Heart right ventricle (tissue), 16 donors: ENCODE measurements at regions of chr1 and their contacts with region 1.

Region 1: GRCh38 chr1:61253059-61253735 is 170.8 kb downstream of the NFIA start:
- DNase-seq: peak; percentile 44 to 81
- ATAC-seq: peak; percentile 67 to 82 (median 77)
- H3K4me3 ChIP-seq: no peak overlapping the region
- H3K27ac ChIP-seq: peak overlapping the region in 9 of 10 donors; percentile 23 to 78 (median 70)
- H3K4me1 ChIP-seq: peaks cover 19 to 90% (median 57%) of the 10 kb centered on the region in 9 donors
- H3K27me3 ChIP-seq: no peaks in the 10 kb centered on the region
- CTCF ChIP-seq: no peak

Region 2: DNA sequence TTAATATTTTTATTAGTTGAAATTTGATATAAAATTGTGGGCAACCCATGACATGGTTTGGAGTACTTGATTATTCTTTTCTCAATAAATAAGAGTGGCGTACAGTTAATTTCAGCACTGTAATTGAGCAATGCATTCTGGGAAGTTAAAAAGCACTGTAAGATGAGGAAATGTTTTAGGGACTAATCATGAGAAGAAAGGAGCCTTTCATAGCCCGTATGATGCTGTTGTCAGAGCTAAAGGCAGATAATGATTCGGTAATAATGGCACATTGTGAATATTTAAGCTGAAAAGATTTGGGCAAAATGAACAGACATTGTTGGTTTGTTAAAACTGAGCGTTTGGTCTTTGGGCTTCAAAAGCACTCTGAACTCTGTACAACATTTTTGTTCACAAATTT is 31.6 kb before region 1 on chr1:
- intact Hi-C with region 1: no loop called
- DNase-seq: no peak
- ATAC-seq: peak in 5 of 8 donors; percentile 34 to 52 (median 47)
- H3K4me3 ChIP-seq: no peak overlapping the region
- H3K27ac ChIP-seq: peak overlapping the region in 3 of 10 donors; percentile 6 to 41 (median 28)
- H3K4me1 ChIP-seq: peaks cover 0 to 53% (median 23%) of the 10 kb centered on the region in 9 donors
- H3K27me3 ChIP-seq: no peaks in the 10 kb centered on the region
- CTCF ChIP-seq: no peak

Region 3: GRCh38 chr1:61318319-61319125 is 65.3 kb after region 1 on chr1:
- intact Hi-C with region 1: loop called in 2 of 10 experiments (anchors 5 kb)
- DNase-seq: no peak
- ATAC-seq: peak; percentile 52 to 85 (median 75)
- H3K4me3 ChIP-seq: peak overlapping the region in 5 of 10 donors; percentile 6 to 32 (median 21)
- H3K27ac ChIP-seq: peak overlapping the region; percentile 15 to 75 (median 60)
- H3K4me1 ChIP-seq: peaks cover 5 to 52% (median 33%) of the 10 kb centered on the region in 9 donors
- H3K27me3 ChIP-seq: no peaks in the 10 kb centered on the region
- CTCF ChIP-seq: no peak

Region 4: DNA sequence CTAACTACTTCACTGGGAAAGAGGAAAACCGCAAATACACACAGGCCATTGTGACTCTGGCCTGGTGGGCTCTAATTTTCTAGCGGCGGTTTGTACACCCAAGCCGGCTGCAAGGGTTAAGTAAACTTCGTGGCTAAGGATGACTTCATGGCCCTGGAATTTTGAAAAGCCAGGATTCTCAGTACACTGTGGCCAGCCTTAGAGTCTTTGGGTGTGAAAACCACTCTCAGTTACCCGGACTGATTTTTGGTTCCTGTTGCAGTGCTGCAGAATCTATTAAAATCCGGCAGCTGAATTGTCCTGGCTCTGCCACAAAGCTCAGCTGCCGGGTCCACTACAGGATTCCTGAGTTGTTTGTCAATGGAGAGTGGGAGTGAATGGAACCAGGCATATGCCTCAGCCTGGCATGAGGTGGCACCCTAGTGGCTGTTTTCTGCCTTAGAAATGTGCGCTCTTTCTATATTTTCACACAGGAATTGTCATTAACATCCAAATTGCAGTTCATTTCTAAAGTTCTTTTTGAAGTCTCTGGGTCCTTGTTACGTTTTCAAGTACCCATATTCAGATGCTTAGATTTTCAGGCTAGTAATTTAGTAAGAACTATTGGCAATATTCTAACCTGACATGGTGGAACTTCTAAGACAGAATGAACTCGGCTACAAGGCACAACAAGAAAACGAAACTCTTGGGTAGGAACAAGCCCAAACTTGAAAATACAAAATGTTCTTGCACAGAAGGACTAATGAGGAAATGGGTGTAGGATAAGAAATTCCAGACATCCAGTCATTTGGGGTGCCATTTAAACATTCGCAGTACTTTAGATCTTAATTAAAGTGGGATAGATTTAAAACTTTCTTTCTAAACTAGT is 85.0 kb after region 1 on chr1:
- intact Hi-C with region 1: loop called in 1 of 10 experiments (anchors 5 kb)
- DNase-seq: peak; percentile 48 to 74
- ATAC-seq: peak; percentile 69 to 90 (median 87)
- H3K4me3 ChIP-seq: peak overlapping the region in 6 of 10 donors; percentile 11 to 28 (median 19)
- H3K27ac ChIP-seq: peak overlapping the region; percentile 44 to 86 (median 75)
- H3K4me1 ChIP-seq: peaks cover 8 to 64% (median 44%) of the 10 kb centered on the region in 9 donors
- H3K27me3 ChIP-seq: no peaks in the 10 kb centered on the region
- CTCF ChIP-seq: peak; percentile 19 to 80 (median 63)